Tibial artery (tissue), 4 donors: ENCODE measurements at regions of chr4 and their contacts with region 1.

Region 1: GRCh38 chr4:75653845-75654503 is 19.2 kb downstream of the G3BP2 start:
- DNase-seq: no peak
- H3K4me3 ChIP-seq: no peak overlapping the region
- H3K27ac ChIP-seq: no peak overlapping the region
- H3K4me1 ChIP-seq: no peaks in the 10 kb centered on the region
- H3K27me3 ChIP-seq: no peaks in the 10 kb centered on the region
- CTCF ChIP-seq: peak; percentile 25 to 31

Region 2: DNA sequence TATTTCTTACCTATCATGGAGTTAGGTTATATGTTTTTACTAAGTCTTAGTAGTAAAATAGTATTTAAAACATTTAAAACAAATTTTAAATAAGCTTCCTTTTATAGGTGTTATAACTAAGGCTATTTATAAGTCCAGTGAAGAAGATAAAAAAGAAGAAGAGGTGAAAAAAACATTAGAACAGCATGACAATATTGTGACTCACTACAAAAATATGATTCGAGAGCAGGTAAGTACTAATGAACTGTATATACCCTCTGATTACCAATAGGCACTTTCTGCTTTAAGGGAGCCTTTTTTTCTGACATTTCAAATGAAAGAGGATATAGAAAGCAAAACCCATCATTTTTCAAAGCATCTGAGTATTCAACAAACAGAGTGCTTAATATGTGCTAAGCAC is 147.0 kb after region 1 on chr4:
- intact Hi-C with region 1: loop called (anchors 10 kb)
- DNase-seq: no peak
- H3K4me3 ChIP-seq: no peak overlapping the region
- H3K27ac ChIP-seq: no peak overlapping the region
- H3K4me1 ChIP-seq: no peaks in the 10 kb centered on the region
- H3K27me3 ChIP-seq: no peaks in the 10 kb centered on the region
- CTCF ChIP-seq: no peak